CD8-positive, alpha-beta T cell (primary cell): ENCODE measurements at regions of chr20 and their contacts with region 1.

Region 1: DNA sequence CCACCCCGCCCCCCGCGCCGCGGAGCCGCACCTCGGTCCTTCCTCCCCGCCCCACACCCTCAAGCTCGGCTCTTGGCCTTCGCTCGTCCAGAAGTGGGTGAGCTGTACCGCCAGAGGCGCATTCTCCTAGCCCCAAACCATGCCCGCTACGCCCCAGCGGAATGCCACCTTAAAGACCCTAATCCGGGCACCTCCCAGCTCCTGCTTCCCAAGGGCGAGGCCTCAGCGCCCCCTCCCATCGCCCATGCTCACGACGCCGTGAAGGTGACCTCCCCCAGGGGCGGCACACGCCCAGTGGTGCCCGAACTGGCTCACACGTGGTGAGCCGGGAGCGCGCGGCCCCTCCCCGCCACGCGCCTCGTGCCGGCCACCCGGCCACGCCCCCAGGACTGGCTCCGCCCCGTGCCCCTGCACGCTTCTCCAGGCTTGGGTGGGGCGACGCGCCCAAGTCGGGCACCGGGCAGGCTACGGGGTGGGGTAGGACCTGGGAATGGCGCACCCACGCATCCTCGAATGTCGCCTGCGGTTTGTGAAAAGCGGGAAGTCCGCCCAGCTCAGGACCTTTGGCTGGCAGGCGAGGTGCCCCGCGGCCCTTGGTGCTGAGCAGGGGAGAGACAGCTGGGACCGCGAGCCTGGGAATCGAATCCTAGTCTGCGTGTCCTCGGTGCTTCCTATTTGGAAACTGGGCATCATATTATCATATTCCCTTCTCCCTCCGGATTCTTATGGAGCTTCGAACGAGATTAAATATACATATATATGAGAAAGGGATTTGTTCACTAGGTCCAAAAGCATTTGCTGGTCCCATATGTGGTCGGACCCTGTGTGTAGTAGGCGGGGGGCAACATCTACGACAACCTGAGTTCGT is 941 bp upstream of the SOX12 start:
- DNase-seq: peak; percentile 74 to 93 (median 91)
- ATAC-seq: peak; percentile 54
- H3K4me3 ChIP-seq: peak overlapping the region; percentile 74 to 97
- H3K4me3 Mint-ChIP-seq: peak overlapping the region; percentile 89
- H3K27ac ChIP-seq: peak overlapping the region; percentile 62 to 71
- H3K27ac Mint-ChIP-seq: peak overlapping the region; percentile 88
- H3K4me1 ChIP-seq: peaks cover 23% of the 10 kb centered on the region
- H3K4me1 Mint-ChIP-seq: peaks cover 35% of the 10 kb centered on the region
- H3K27me3 ChIP-seq: no peaks in the 10 kb centered on the region
- H3K27me3 Mint-ChIP-seq: no peaks in the 10 kb centered on the region
- CTCF ChIP-seq: peak; percentile 43

Region 2: DNA sequence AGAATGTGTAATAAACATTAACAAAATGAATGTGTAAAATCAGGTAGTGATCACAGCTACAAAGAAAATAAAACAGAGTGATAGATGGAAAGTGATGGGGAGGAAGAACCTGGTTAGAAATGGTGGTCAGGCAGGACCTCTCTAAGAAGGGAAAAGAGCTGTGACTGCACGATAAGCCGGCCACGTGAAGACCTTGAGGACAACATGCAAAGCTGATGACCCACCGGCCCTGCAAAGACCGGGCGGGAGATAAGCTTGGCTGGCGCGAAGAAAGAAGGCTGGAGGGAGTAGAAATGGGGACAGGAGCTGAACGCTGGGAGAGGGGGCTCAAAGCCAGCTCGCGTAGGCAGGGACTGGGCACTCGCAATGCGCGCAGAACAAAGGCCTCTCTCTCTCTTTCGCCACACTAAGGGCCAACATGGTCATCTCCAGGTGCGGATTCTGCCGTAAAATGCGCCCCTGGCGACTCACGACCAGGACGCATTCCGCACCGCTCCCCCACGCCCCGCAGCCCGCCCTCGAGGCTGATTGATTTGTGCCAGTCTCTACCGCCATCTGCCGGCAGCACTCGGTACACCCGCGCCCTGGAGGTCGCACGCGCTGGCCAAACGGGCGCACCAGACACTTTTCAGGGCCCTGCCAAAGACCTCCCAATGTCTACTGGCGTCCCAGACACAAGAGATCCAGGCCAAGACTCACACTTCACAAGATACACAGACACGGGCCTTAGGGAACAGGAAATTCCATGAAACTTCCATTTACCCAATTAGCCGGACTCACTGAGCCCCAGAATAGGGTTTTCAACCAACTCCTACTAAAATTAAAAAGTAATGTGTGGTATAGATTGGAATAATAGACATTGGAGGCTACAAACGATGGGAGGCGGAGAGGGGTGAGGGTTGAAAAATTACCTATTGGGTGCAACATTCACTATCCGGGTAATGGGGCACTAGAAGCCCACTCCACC is 57.5 kb before region 1 on chr20:
- CTCF ChIA-PET with region 1: interaction called, 51 read pairs
- POLR2A ChIA-PET with region 1: interaction called, 3 read pairs
- intact Hi-C with region 1: loop called in 1 of 2 experiments (anchors 1 kb)
- DNase-seq: peak; percentile 78 to 95 (median 89)
- ATAC-seq: peak; percentile 100
- H3K4me3 ChIP-seq: peak overlapping the region; percentile 51 to 69
- H3K4me3 Mint-ChIP-seq: peak overlapping the region; percentile 86
- H3K27ac ChIP-seq: no peak overlapping the region
- H3K27ac Mint-ChIP-seq: no peak overlapping the region
- H3K4me1 ChIP-seq: no peaks in the 10 kb centered on the region
- H3K4me1 Mint-ChIP-seq: peaks cover 9% of the 10 kb centered on the region
- H3K27me3 ChIP-seq: no peaks in the 10 kb centered on the region
- H3K27me3 Mint-ChIP-seq: peaks cover 2% of the 10 kb centered on the region
- CTCF ChIP-seq: peak; percentile 92

Region 3: DNA sequence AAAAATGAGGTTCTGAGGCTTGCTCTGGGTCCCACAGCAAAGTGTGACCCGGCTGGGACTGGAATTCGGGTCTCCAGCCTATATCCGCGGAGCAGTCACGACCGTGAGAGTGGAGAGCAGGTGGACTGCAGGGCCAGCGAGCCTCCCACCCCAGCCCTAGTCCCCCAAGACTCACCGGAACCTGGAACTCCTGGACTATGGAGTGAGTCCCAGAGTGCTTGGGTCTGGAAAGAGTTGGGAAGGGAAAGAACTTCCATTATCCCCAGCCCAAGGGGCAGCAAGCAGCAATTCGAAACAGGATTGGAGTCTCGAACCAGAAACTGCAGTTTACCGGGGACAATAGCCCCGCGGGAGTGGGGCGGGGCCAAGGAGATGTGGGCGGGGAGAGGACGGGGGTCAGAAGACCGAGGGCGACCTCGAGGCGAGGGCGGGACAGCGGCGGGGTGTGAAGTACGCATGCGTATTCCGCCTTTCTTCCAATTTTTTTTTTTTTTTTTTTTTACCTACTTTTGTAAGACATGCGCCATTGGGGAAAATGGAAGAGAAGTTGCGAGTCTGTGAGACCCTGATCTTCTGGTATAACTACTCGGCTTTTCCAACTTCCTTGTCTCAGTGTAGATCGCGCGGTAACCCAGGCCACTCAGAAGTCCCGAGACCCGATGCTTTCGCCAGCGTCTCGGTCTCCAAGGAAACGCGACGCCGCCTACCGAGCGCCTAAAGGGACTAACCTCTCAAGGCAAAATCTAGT is 34.2 kb before region 1 on chr20 and contains the start of gene C20orf96:
- CTCF ChIA-PET with region 1: interaction called, 10 read pairs
- POLR2A ChIA-PET with region 1: interaction called, 3 read pairs
- intact Hi-C with region 1: loop called (anchors 1 kb)
- DNase-seq: peak; percentile 62 to 92 (median 84)
- ATAC-seq: peak; percentile 88
- H3K4me3 ChIP-seq: peak within 1 kb of the TSS; percentile 54 to 73
- H3K4me3 Mint-ChIP-seq: no peak within 1 kb of the TSS
- H3K27ac ChIP-seq: peak within 1 kb of the TSS; percentile 17 to 28
- H3K27ac Mint-ChIP-seq: no peak within 1 kb of the TSS
- H3K4me1 ChIP-seq: peaks cover 22% of the 10 kb centered on the region
- H3K4me1 Mint-ChIP-seq: peaks cover 6% of the 10 kb centered on the region
- H3K27me3 ChIP-seq: no peaks in the 10 kb centered on the region
- H3K27me3 Mint-ChIP-seq: no peaks in the 10 kb centered on the region
- CTCF ChIP-seq: peak; percentile 34
- total RNA-seq, gene C20orf96: 1.9 to 2.6 TPM

Region 4: GRCh38 chr20:297098-297924 is 27.1 kb before region 1 on chr20 and contains the start of gene ZCCHC3:
- CTCF ChIA-PET with region 1: interaction called, 37 read pairs
- POLR2A ChIA-PET with region 1: interaction called, 44 read pairs
- intact Hi-C with region 1: loop called (anchors 1 kb)
- DNase-seq: peak; percentile 58 to 93 (median 83)
- ATAC-seq: peak; percentile 85
- H3K4me3 ChIP-seq: peak within 1 kb of the TSS; percentile 86 to 98
- H3K4me3 Mint-ChIP-seq: peak within 1 kb of the TSS; percentile 99
- H3K27ac ChIP-seq: peak within 1 kb of the TSS; percentile 88 to 90
- H3K27ac Mint-ChIP-seq: peak within 1 kb of the TSS; percentile 98
- H3K4me1 ChIP-seq: peaks cover 28% of the 10 kb centered on the region
- H3K4me1 Mint-ChIP-seq: peaks cover 44% of the 10 kb centered on the region
- H3K27me3 ChIP-seq: no peaks in the 10 kb centered on the region
- H3K27me3 Mint-ChIP-seq: no peaks in the 10 kb centered on the region
- CTCF ChIP-seq: no peak
- total RNA-seq, gene ZCCHC3: 21.8 to 22.0 TPM

Region 5: DNA sequence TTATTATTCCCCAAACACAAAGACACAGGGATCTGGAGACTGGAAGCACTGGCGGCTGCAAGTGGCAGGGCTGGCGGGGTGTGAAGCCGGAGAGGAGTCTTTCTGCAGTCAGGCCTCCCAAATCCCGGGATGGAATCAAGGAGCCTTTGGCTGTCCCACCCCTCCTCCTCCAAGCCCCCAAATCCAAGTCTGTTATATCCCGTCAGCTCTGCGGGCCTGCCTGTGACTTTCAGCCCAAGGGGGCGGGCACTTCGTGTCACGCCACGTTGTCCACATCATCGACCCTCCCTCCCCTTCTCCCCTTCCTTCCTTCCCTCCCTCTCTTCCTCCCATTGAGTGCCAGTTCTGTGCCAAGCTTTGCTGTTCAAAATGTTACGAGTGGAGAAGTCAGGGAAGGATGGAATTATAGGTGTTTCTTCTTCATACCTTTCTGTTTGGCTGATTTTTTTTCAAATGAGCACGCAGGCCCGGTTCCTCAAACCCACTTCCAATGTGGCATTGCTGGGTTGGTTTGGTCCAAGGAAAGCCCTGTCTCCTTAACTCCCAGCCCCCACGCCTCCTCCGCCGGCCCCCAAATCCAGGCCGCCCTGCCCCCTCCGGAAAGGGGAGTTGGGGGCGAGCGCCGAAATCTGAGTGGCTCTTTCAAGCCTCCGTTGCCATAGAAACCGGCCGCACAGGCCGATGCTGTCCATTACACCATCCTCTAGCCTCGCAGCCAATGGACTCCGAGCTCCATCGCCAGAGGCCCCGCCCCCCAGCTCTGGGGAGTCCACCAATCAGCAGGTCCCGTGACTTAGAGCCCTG is 14.4 kb before region 1 on chr20:
- CTCF ChIA-PET with region 1: interaction called, 9 read pairs
- POLR2A ChIA-PET with region 1: interaction called, 5 read pairs
- intact Hi-C with region 1: loop called in 1 of 2 experiments (anchors 1 kb)
- DNase-seq: peak in 8 of 9 experiments; percentile 64 to 88 (median 80)
- ATAC-seq: peak; percentile 100
- H3K4me3 ChIP-seq: peak overlapping the region; percentile 38 to 59
- H3K4me3 Mint-ChIP-seq: peak overlapping the region; percentile 81
- H3K27ac ChIP-seq: no peak overlapping the region
- H3K27ac Mint-ChIP-seq: no peak overlapping the region
- H3K4me1 ChIP-seq: peaks cover 13% of the 10 kb centered on the region
- H3K4me1 Mint-ChIP-seq: peaks cover 18% of the 10 kb centered on the region
- H3K27me3 ChIP-seq: no peaks in the 10 kb centered on the region
- H3K27me3 Mint-ChIP-seq: no peaks in the 10 kb centered on the region
- CTCF ChIP-seq: no peak

Region 6: GRCh38 chr20:407133-407952 is 82.9 kb after region 1 on chr20:
- CTCF ChIA-PET with region 1: no interaction called
- POLR2A ChIA-PET with region 1: no interaction called
- intact Hi-C with region 1: loop called (anchors 1 to 2 kb)
- DNase-seq: peak in 7 of 9 experiments; percentile 48 to 83 (median 68)
- ATAC-seq: peak; percentile 71
- H3K4me3 ChIP-seq: peak overlapping the region; percentile 56 to 71
- H3K4me3 Mint-ChIP-seq: peak overlapping the region; percentile 91
- H3K27ac ChIP-seq: peak overlapping the region; percentile 9 to 41
- H3K27ac Mint-ChIP-seq: peak overlapping the region; percentile 95
- H3K4me1 ChIP-seq: peaks cover 34% of the 10 kb centered on the region
- H3K4me1 Mint-ChIP-seq: peaks cover 47% of the 10 kb centered on the region
- H3K27me3 ChIP-seq: no peaks in the 10 kb centered on the region
- H3K27me3 Mint-ChIP-seq: no peaks in the 10 kb centered on the region
- CTCF ChIP-seq: peak; percentile 45

Region 7: GRCh38 chr20:844473-845225 is 520.2 kb after region 1 on chr20:
- CTCF ChIA-PET with region 1: no interaction called
- POLR2A ChIA-PET with region 1: no interaction called
- intact Hi-C with region 1: loop called in 1 of 2 experiments (anchors 10 kb)
- DNase-seq: peak; percentile 81 to 97 (median 90)
- ATAC-seq: peak; percentile 94
- H3K4me3 ChIP-seq: peak overlapping the region; percentile 65 to 71
- H3K4me3 Mint-ChIP-seq: peak overlapping the region; percentile 94
- H3K27ac ChIP-seq: peak overlapping the region; percentile 26 to 48
- H3K27ac Mint-ChIP-seq: peak overlapping the region; percentile 84
- H3K4me1 ChIP-seq: peaks cover 52% of the 10 kb centered on the region
- H3K4me1 Mint-ChIP-seq: peaks cover 54% of the 10 kb centered on the region
- H3K27me3 ChIP-seq: no peaks in the 10 kb centered on the region
- H3K27me3 Mint-ChIP-seq: no peaks in the 10 kb centered on the region
- CTCF ChIP-seq: no peak